ENCODE measurements at regions of chr1 and their contacts with region 1.

Region 1: GRCh38 chr1:236064674-236065508 is at the start of gene NID1:
- DNase-seq: peak; percentile 93
- total RNA-seq, gene NID1: 42.1 TPM

Region 2: GRCh38 chr1:235866913-235867845 is 197.7 kb before region 1 on chr1:
- intact Hi-C with region 1: loop called (anchors 10 kb)
- DNase-seq: peak; percentile 99

Region 3: DNA sequence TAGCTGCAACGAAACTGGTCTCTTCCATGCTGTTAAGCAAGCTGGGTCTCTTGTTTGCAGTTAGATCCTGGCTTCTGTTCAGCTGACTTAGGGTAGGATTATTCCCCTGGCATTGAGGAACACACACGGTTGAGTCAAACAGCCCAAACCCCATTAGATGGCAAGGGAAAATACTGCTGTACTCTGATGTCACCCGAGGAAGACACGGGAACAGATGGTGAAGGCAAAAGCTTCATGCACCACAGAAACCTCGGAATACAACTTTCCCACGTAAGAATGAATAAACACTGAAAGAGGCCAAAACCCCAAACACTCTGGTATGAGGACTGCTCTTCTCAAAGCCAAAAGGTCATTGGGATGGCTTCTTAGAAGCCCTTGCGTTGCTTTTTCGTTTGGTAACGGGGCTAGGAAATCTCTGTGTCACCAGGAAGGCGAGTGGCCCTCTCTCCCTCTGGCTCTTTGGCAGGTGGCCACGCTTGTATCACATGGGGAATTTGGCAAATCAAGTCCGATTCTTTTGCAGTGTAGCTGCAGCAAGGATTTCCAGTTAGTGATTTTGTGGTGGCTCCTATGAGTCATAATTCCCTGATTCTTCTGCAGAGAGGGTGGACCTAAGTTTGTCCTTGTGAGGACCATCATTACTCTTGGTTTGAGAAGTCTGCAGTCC is 181.5 kb before region 1 on chr1:
- intact Hi-C with region 1: no loop called
- DNase-seq: peak; percentile 92

Region 4: GRCh38 chr1:235971571-235972310 is 93.2 kb before region 1 on chr1:
- intact Hi-C with region 1: loop called (anchors 5 kb)
- DNase-seq: peak; percentile 96

Region 5: DNA sequence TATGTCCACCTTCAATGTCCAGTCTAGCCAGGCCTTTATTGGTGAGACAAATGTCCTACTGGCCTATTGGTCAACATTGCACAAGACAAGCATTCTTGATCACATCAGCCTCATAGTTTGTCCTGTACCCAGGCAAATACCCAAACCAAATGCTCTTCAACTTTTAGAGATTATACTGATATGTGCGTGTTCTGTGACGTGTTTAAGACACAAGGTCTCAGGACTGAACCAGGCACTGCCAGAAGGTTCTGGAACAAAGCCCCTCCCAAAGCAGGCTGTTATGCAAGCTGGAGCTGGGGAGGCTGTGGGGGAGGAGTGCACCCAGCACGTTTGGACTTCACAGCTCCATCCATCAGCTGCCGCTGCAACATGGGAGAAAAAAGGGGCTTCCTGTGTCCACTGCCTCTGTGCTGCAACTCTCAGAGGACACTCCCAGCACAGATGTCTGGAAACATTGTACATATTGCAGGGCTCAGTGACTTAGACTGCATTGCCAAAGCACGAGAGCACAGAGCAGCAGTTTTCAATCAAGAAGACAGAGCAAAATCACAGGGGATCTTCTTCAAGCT is 45.9 kb before region 1 on chr1:
- intact Hi-C with region 1: loop called (anchors 5 kb)
- DNase-seq: peak; percentile 83